CD4-positive, alpha-beta memory T cell (primary cell): ENCODE measurements at regions of chr2 and their contacts with region 1.

Region 1: GRCh38 chr2:171319164-171319810 is 114.5 kb downstream of the METTL8 start:
- DNase-seq: peak; percentile 47 to 75 (median 56)
- H3K4me3 ChIP-seq: no peak overlapping the region
- H3K4me3 Mint-ChIP-seq: peak overlapping the region; percentile 66 to 82 (median 77)
- H3K27ac ChIP-seq: peak overlapping the region; percentile 37
- H3K27ac Mint-ChIP-seq: peak overlapping the region; percentile 43 to 94 (median 77)
- H3K4me1 ChIP-seq: peaks cover 43% of the 10 kb centered on the region
- H3K4me1 Mint-ChIP-seq: peaks cover 41 to 51% (median 48%) of the 10 kb centered on the region in 4 donors
- H3K27me3 ChIP-seq: no peaks in the 10 kb centered on the region
- H3K27me3 Mint-ChIP-seq: no peaks in the 10 kb centered on the region

Region 2: GRCh38 chr2:170973492-170974303 is 345.6 kb before region 1 on chr2:
- CTCF ChIA-PET with region 1: no interaction called
- POLR2A ChIA-PET with region 1: no interaction called
- intact Hi-C with region 1: loop called (anchors 5 kb)
- DNase-seq: peak; percentile 87 to 91 (median 87)
- H3K4me3 ChIP-seq: peak overlapping the region; percentile 26 to 77
- H3K4me3 Mint-ChIP-seq: peak overlapping the region; percentile 81 to 88 (median 84)
- H3K27ac ChIP-seq: peak overlapping the region; percentile 52
- H3K27ac Mint-ChIP-seq: peak overlapping the region; percentile 25 to 90 (median 54)
- H3K4me1 ChIP-seq: peaks cover 14% of the 10 kb centered on the region
- H3K4me1 Mint-ChIP-seq: peaks cover 7 to 16% (median 10%) of the 10 kb centered on the region in 4 donors
- H3K27me3 ChIP-seq: no peaks in the 10 kb centered on the region
- H3K27me3 Mint-ChIP-seq: no peaks in the 10 kb centered on the region